ENCODE measurements at regions of chr11 and their contacts with region 1.

Region 1: GRCh38 chr11:5808500-5809121 is at the start of gene OR52N2:
- DNase-seq: peak; percentile 63
- ATAC-seq: peak; percentile 98
- H3K4me3 ChIP-seq: peak within 1 kb of the TSS in 2 of 3 experiments; percentile 16 to 53; a peak in 3 of 6 replicates
- H3K27ac ChIP-seq: no peak within 1 kb of the TSS
- H3K4me1 ChIP-seq: peaks cover 18% of the 10 kb centered on the region
- H3K27me3 ChIP-seq: peaks cover 1 to 25% of the 10 kb centered on the region in 2 experiments; a peak in 4 of 5 replicates
- CTCF ChIP-seq: peak; percentile 90
- EP300 ChIP-seq: no peak
- POLR2A ChIP-seq: no peak
- RAD21 ChIP-seq: peak; percentile 77
- total RNA-seq, gene OR52N2: not detected in 2 replicates

Region 2: DNA sequence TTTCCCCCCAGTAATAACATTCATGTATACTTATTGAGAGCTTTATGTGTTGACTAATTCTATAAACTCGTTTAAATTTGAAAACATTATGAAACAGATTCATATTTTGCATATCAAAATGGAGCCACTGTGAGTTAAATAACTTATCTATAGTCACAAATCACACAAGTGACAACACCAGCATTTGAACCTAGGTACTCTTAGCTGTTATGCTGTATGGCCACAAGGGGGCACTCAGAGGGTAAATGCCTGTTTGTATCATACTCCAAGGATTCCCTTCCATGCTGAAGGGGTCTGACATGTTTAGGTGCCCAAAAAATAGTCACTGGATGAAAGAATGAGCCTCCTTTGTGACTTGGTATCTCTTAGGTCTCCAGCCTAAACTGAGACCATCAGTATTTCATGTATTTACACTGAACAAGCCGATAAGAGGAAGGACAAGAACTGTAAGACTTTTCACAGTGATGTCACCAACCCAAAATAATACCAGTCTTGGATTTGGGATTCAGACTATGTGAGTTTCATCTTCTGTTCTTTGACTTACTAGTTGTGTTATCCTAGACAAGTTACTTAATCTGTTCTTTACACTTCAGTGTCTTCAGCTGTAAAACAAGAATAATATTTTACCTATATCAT is 332.3 kb before region 1 on chr11:
- CTCF ChIA-PET with region 1: interaction called, 35 read pairs
- POLR2A ChIA-PET with region 1: no interaction called
- in situ Hi-C with region 1: loop called (anchors 5 kb)
- intact Hi-C with region 1: no loop called
- DNase-seq: peak; percentile 36
- ATAC-seq: peak; percentile 77
- H3K4me3 ChIP-seq: no peak overlapping the region
- H3K27ac ChIP-seq: no peak overlapping the region
- H3K4me1 ChIP-seq: no peaks in the 10 kb centered on the region
- H3K27me3 ChIP-seq: 0 out of 5 replicates have a peak, but pooled peaks cover 0 to 9% of the 10 kb centered on the region in 2 experiments
- CTCF ChIP-seq: peak; percentile 74
- EP300 ChIP-seq: no peak
- POLR2A ChIP-seq: no peak
- RAD21 ChIP-seq: no peak

Region 3: DNA sequence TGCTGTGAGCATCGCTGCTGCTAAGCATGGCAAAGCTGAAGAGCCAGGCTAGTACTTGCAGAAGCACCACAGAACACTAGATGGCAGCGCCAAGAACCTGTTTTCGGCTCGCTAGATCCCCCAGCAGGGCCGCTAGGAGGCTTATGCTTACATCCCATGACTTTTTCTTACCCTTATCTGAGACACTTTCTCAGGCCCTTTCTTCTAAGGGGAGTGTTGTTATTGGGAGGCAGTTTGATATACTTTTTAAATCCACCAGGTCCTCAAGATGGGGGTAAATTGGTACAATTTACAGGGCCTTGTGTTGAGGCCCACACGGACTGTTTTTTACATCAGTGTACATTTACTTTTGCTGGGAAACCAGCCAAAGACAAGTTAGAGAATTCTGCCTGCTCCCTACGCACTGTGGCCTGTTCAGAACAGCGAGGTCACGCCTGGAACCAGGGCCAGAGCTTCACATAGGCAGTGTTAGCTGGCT is 208.2 kb before region 1 on chr11:
- CTCF ChIA-PET with region 1: interaction called, 37 read pairs
- POLR2A ChIA-PET with region 1: no interaction called
- in situ Hi-C with region 1: loop called (anchors 5 kb)
- intact Hi-C with region 1: loop called (anchors 1 kb)
- DNase-seq: peak; percentile 63
- ATAC-seq: peak; percentile 99
- H3K4me3 ChIP-seq: no peak overlapping the region
- H3K27ac ChIP-seq: no peak overlapping the region
- H3K4me1 ChIP-seq: no peaks in the 10 kb centered on the region
- H3K27me3 ChIP-seq: 0 out of 5 replicates have a peak, but pooled peaks cover 0 to 4% of the 10 kb centered on the region in 2 experiments
- CTCF ChIP-seq: peak; percentile 77
- EP300 ChIP-seq: no peak
- POLR2A ChIP-seq: no peak
- RAD21 ChIP-seq: no peak; the same call in 1 of the 2 replicates

Region 4: GRCh38 chr11:5684646-5685362 is 123.8 kb before region 1 on chr11 and contains the start of gene TRIM5:
- CTCF ChIA-PET with region 1: interaction called, 9 read pairs
- POLR2A ChIA-PET with region 1: no interaction called
- in situ Hi-C with region 1: loop called (anchors 10 kb)
- intact Hi-C with region 1: loop called (anchors 1 kb)
- DNase-seq: peak; percentile 92
- ATAC-seq: peak; percentile 99
- H3K4me3 ChIP-seq: peak within 1 kb of the TSS; percentile 55 to 70 (median 65)
- H3K27ac ChIP-seq: peak within 1 kb of the TSS; percentile 86
- H3K4me1 ChIP-seq: no peaks in the 10 kb centered on the region
- H3K27me3 ChIP-seq: no peaks in the 10 kb centered on the region
- CTCF ChIP-seq: peak; percentile 65
- EP300 ChIP-seq: no peak; a peak in 1 of 4 replicates
- POLR2A ChIP-seq: peak; percentile 73 to 74; a peak in 3 of 4 replicates
- RAD21 ChIP-seq: no peak
- total RNA-seq, gene TRIM5: 13.1 and 19.9 TPM in 2 replicates

Region 5: GRCh38 chr11:5857590-5857989 is 49.0 kb after region 1 on chr11 and contains the start of gene OR52E8:
- CTCF ChIA-PET with region 1: no interaction called
- POLR2A ChIA-PET with region 1: no interaction called
- in situ Hi-C with region 1: no loop called
- intact Hi-C with region 1: no loop called
- DNase-seq: no peak
- ATAC-seq: no peak
- H3K4me3 ChIP-seq: no peak within 1 kb of the TSS
- H3K27ac ChIP-seq: no peak within 1 kb of the TSS
- H3K4me1 ChIP-seq: no peaks in the 10 kb centered on the region
- H3K27me3 ChIP-seq: no peaks in the 10 kb centered on the region
- CTCF ChIP-seq: no peak
- EP300 ChIP-seq: no peak
- POLR2A ChIP-seq: no peak
- RAD21 ChIP-seq: no peak
- total RNA-seq, gene OR52E8: not detected in 2 replicates